ENCODE measurements at regions of chr18 and their contacts with region 1.

Region 1: GRCh38 chr18:31555971-31556747 is 35.5 kb upstream of the TTR start:
- DNase-seq: peak; percentile 56
- ATAC-seq: peak; percentile 61
- H3K4me3 Mint-ChIP-seq: no peak overlapping the region
- H3K27ac Mint-ChIP-seq: no peak overlapping the region
- H3K4me1 Mint-ChIP-seq: peaks cover 2% of the 10 kb centered on the region
- H3K27me3 Mint-ChIP-seq: peaks cover 5% of the 10 kb centered on the region

Region 2: GRCh38 chr18:30999186-30999585 is 557.0 kb before region 1 on chr18:
- CTCF ChIA-PET with region 1: no interaction called
- POLR2A ChIA-PET with region 1: no interaction called
- intact Hi-C with region 1: loop called in 1 of 2 experiments (anchors 10 kb)
- DNase-seq: no peak
- ATAC-seq: no peak
- H3K4me3 Mint-ChIP-seq: no peak overlapping the region
- H3K27ac Mint-ChIP-seq: no peak overlapping the region
- H3K4me1 Mint-ChIP-seq: no peaks in the 10 kb centered on the region
- H3K27me3 Mint-ChIP-seq: no peaks in the 10 kb centered on the region

Region 3: GRCh38 chr18:31741097-31741735 is 185.1 kb after region 1 on chr18:
- CTCF ChIA-PET with region 1: no interaction called
- POLR2A ChIA-PET with region 1: no interaction called
- intact Hi-C with region 1: loop called in 1 of 2 experiments (anchors 5 kb)
- DNase-seq: peak; percentile 73
- ATAC-seq: no peak
- H3K4me3 Mint-ChIP-seq: no peak overlapping the region
- H3K27ac Mint-ChIP-seq: no peak overlapping the region
- H3K4me1 Mint-ChIP-seq: no peaks in the 10 kb centered on the region
- H3K27me3 Mint-ChIP-seq: no peaks in the 10 kb centered on the region

Measured in activated CD4-positive, alpha-beta T cell treated with anti-CD3 and anti-CD28 coated beads for 36 hours (primary cell).